Mucosa of descending colon (tissue), 3 donors: ENCODE measurements at regions of chr1 and their contacts with region 1.

Region 1: DNA sequence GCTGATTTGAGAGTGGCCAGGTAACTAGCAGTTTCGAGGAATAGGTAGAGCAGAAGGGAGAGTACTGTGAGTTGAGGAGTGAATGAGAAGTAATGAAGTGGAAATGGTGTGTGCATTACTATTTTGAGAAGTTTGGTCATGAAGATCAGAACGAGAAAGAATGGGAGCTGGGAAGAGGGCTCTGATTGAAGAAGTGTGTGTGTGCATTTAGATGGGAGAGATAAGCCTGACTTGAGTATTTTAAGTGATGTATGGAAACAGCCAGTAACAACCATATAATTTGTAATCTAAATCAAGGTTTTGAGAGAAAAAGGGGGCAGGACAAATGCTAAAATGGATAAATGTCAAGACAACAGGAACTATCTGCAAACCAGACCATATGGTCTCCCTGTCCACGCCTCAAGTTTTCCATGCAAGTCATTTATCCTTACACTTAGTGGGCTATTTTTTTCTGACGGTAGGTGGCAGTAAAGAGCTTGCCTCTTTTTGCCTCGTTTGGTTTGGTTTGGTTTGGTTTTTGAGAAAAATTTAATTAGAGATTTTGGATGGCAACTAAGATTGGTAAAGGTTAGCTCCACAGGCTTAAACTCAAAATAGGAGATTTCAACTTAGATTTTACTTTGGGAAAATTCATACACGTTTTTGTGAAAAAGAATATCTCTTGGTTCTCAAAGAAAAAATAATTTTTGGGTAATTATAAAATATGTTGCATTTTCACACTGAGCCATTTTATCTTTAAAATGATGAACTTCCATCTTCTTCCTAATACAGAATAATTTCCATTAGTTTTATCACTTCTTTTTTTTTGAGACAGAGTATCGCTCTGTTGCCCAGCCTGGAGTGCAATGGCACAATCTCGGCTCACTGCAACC is 9.5 kb upstream of the B3GALNT2 start:
- DNase-seq: peak in 1 of 3 donors; percentile 85
- ATAC-seq: peak; percentile 71
- H3K4me3 ChIP-seq: no peak overlapping the region
- H3K4me1 ChIP-seq: peaks cover 4% of the 10 kb centered on the region
- CTCF ChIP-seq: peak; percentile 78

Region 2: GRCh38 chr1:235783148-235783776 is 269.5 kb after region 1 on chr1:
- intact Hi-C with region 1: loop called in 1 of 2 experiments (anchors 10 kb)
- DNase-seq: no peak
- ATAC-seq: no peak
- H3K4me3 ChIP-seq: no peak overlapping the region
- H3K4me1 ChIP-seq: no peaks in the 10 kb centered on the region
- CTCF ChIP-seq: no peak